ENCODE measurements at regions of chr10 and their contacts with region 1.

Region 1: GRCh38 chr10:49009199-49009979 is 69.7 kb upstream of the LRRC18 start:
- DNase-seq: no peak

Region 2: DNA sequence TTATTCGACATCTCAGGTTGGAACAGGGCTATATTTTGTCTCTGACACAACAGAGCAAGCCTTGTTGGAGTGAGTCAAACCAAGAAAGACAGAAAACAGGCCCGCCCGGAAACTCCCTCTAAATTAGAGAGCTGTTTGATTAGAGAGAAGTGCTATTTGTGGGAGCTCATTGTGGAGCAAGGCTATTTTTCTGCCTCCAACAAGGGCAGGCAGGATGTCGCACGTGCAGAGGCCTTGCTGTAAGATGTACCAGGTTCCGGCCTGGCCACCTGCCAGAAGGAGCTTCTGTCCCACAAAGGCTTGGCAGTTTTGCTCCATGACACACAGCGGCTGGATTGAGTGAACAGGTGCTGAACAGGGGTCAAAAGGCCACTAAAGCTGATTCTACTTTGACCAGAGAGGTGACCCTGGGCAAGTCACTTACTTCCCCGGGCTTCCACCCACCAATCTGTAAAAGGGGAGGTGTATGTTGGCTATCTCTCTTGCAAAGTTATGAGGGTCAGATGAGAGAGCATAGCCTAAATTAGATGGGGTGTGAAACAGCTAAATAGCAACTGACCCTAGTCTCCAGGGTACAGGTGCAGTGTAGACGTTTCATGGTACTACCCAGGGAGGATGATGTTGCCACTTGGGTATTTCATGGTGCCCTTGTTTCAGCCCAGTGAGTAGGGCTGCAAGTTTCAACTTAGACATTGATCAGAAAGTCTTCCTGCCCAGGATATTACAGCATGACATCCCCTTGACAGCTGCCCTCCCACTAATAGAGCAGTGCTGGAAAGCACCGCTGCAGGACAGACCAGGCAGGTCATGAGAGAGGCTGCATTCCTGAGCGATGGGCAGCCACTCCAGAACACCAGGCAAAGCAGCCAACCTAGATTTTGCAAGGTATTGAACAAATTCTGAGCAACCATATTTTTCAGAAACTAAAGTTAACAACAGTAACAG is 43.9 kb after region 1 on chr10:
- intact Hi-C with region 1: loop called (anchors 5 kb)
- DNase-seq: no peak

Region 3: GRCh38 chr10:49109669-49110340 is 100.4 kb after region 1 on chr10:
- intact Hi-C with region 1: loop called (anchors 5 kb)
- DNase-seq: peak; percentile 80

Region 4: GRCh38 chr10:49242604-49243003 is 233.2 kb after region 1 on chr10:
- intact Hi-C with region 1: no loop called
- DNase-seq: peak; percentile 84

Measured in cardiac septum (tissue), 1 donor.